Activated CD4-positive, alpha-beta T cell treated with anti-CD3 and anti-CD28 coated beads, Interleukin-2, amount 10 ng/mL, durations not matched to agents 7 days and 5 days (primary cell): ENCODE measurements at regions of chr19 and their contacts with region 1.

Region 1: GRCh38 chr19:39819786-39820185 is 14.2 kb downstream of the DYRK1B start:
- DNase-seq: no peak
- H3K4me3 Mint-ChIP-seq: no peak overlapping the region
- H3K27ac Mint-ChIP-seq: no peak overlapping the region
- H3K4me1 Mint-ChIP-seq: peaks cover 2% of the 10 kb centered on the region
- H3K27me3 Mint-ChIP-seq: no peaks in the 10 kb centered on the region

Region 2: DNA sequence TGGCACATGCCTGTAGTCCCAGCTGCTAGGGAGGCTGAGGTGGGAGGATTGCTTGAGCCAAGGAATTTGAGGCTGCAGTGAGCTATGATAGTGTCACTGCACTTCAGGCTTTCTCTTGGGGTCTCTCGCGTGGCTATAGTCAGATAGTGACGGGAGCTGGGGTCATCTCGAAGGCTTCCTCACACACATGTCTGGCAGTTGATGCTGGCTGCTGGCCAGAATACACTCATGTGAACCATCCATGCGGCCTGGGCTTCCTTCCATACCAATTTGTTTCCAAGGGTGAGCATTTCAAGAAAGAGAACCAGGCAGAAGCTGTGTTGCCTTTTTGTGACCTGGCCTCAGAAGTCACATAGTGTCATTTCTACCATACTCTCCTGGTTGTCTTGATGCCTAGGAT is 14.7 kb before region 1 on chr19:
- CTCF ChIA-PET with region 1: no interaction called
- POLR2A ChIA-PET with region 1: no interaction called
- DNase-seq: no peak
- H3K4me3 Mint-ChIP-seq: no peak overlapping the region
- H3K27ac Mint-ChIP-seq: no peak overlapping the region
- H3K4me1 Mint-ChIP-seq: no peaks in the 10 kb centered on the region
- H3K27me3 Mint-ChIP-seq: peaks cover 13% of the 10 kb centered on the region

Region 3: DNA sequence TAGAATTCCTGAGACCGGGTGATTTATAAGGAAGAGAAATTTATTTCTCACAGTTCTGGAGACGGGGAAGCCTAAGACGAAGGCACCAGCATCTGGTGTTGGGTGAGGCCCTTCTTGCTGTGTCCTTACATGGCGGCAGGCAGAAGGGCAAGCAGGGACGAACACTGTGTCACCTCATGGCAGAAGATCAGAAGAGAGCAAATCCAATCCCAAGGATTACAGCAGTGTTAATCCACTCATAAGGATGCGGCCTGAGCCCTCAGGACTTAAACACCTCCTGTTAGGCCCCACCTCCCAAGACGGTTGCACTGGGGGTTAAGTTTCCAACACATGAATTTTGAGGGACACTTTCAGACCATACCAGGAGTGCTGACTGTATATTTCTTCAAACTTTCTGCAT is 33.1 kb after region 1 on chr19:
- CTCF ChIA-PET with region 1: no interaction called
- POLR2A ChIA-PET with region 1: no interaction called
- DNase-seq: no peak
- H3K4me3 Mint-ChIP-seq: no peak overlapping the region
- H3K27ac Mint-ChIP-seq: no peak overlapping the region
- H3K4me1 Mint-ChIP-seq: no peaks in the 10 kb centered on the region
- H3K27me3 Mint-ChIP-seq: peaks cover 2% of the 10 kb centered on the region

Region 4: DNA sequence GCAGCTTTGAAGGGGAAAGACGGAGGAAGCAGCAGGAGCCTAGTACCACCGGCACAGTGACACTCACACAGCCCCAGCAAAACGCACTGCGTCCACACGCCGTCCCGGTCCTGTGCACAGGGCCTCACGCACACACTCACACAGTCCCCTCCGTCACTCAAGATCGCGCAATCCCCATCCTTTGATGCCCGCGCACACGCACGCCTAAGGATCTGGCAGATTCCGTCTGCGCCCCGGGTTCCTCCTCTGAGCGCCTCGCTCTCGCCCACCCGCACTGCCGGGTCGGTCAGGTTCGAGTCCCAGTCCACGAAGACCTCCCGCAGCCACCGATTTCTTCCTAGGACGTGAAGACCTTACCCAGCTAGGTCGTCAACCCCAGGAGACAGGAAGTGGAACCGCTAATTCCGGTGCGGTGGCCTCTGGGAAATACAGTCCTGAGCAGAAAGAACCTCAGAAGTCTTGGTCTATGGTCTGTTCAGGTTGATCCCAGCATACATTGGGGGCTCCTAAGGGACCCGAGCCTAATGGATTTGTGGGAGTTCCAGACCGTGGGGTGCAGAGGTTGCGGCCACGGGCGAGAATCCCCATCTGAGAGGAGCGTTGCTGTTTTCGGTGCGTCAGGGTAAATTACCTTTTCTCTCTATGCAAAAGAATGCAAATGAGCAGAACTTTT is 236.2 kb after region 1 on chr19 and contains the start of gene ZNF780B:
- CTCF ChIA-PET with region 1: interaction called, 10 read pairs
- POLR2A ChIA-PET with region 1: no interaction called
- DNase-seq: peak; percentile 82
- H3K4me3 Mint-ChIP-seq: peak within 1 kb of the TSS; percentile 99
- H3K27ac Mint-ChIP-seq: peak within 1 kb of the TSS; percentile 97
- H3K4me1 Mint-ChIP-seq: peaks cover 45% of the 10 kb centered on the region
- H3K27me3 Mint-ChIP-seq: peaks cover 21% of the 10 kb centered on the region
- total RNA-seq, gene ZNF780B: 28.3 to 30.5 TPM